ENCODE measurements at regions of chr9 and their contacts with region 1.

Region 1: GRCh38 chr9:111037381-111038305 is 627 bp downstream of the LPAR1 start:
- DNase-seq: peak in 1 of 2 experiments; percentile 70
- H3K4me3 ChIP-seq: peak overlapping the region; percentile 60 to 92 (median 66)
- H3K27ac ChIP-seq: no peak overlapping the region
- H3K4me1 ChIP-seq: peaks cover 0 to 7% (median under 1%) of the 10 kb centered on the region in 4 experiments; a peak in 2 of 7 replicates
- H3K27me3 ChIP-seq: peaks cover 3 to 18% (median 12%) of the 10 kb centered on the region in 4 experiments
- CTCF ChIP-seq: peak; percentile 41 to 70 (median 54)
- EP300 ChIP-seq: peak in 1 of 2 experiments; percentile 4; a peak in 1 of 3 replicates
- POLR2A ChIP-seq: no peak
- RAD21 ChIP-seq: peak; percentile 35 to 65

Region 2: GRCh38 chr9:110886832-110887231 is 150.8 kb before region 1 on chr9:
- CTCF ChIA-PET with region 1: no interaction called
- POLR2A ChIA-PET with region 1: no interaction called
- DNase-seq: no peak
- H3K4me3 ChIP-seq: no peak overlapping the region
- H3K27ac ChIP-seq: no peak overlapping the region
- H3K4me1 ChIP-seq: no peaks in the 10 kb centered on the region
- H3K27me3 ChIP-seq: no peaks in the 10 kb centered on the region
- CTCF ChIP-seq: no peak
- EP300 ChIP-seq: no peak
- POLR2A ChIP-seq: no peak
- RAD21 ChIP-seq: no peak

Region 3: GRCh38 chr9:111298731-111299598 is 261.3 kb after region 1 on chr9:
- CTCF ChIA-PET with region 1: interaction called, 10 read pairs
- POLR2A ChIA-PET with region 1: no interaction called
- DNase-seq: no peak
- H3K4me3 ChIP-seq: no peak overlapping the region
- H3K27ac ChIP-seq: no peak overlapping the region
- H3K4me1 ChIP-seq: no peaks in the 10 kb centered on the region
- H3K27me3 ChIP-seq: no peaks in the 10 kb centered on the region
- CTCF ChIP-seq: peak in 2 of 3 experiments; percentile 42 to 59; a peak in 2 of 4 replicates
- EP300 ChIP-seq: no peak
- POLR2A ChIP-seq: no peak
- RAD21 ChIP-seq: peak; percentile 92 to 93

Measured in H1 (cell line).